GM13977 (cell line): ENCODE measurements at regions of chr2 and their contacts with region 1.

Region 1: GRCh38 chr2:179129574-179130238 is 79.8 kb upstream of the CCDC141 start:
- DNase-seq: peak; percentile 15
- CTCF ChIP-seq: peak; percentile 80

Region 2: DNA sequence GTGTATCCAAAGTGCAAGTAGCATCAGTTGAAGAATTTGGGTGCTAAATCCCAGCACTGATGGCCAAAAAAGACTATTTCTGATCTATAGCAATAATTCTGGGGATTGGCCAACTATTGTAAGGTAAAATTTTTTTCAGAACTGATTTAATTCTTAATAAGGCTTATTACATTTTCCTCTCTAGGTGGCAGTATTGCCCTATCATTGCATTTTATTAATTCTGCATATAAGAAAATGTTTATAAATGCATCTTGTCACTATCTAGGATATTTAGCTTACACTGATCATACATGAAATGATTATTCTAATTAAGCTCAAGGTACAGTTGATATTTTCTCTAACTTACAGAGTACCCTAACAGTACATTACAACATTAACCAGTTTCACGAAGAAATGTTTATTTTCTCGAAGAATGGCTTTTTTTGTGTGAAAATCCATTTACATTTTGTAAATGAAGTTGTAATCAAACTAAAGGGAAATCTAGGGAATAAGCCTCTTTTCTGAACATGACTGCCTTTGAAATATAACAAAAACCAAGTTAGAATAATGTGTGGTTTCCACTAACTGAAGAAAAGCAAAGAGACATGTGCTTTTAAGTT is 333.5 kb before region 1 on chr2:
- in situ Hi-C with region 1: loop called (anchors 25 kb)
- DNase-seq: peak; percentile 48
- CTCF ChIP-seq: peak; percentile 48

Region 3: GRCh38 chr2:178830451-178830850 is 299.3 kb before region 1 on chr2:
- in situ Hi-C with region 1: no loop called
- DNase-seq: no peak
- CTCF ChIP-seq: no peak

Region 4: GRCh38 chr2:179550214-179550613 is 420.5 kb after region 1 on chr2:
- in situ Hi-C with region 1: no loop called
- DNase-seq: no peak
- CTCF ChIP-seq: no peak

Region 5: DNA sequence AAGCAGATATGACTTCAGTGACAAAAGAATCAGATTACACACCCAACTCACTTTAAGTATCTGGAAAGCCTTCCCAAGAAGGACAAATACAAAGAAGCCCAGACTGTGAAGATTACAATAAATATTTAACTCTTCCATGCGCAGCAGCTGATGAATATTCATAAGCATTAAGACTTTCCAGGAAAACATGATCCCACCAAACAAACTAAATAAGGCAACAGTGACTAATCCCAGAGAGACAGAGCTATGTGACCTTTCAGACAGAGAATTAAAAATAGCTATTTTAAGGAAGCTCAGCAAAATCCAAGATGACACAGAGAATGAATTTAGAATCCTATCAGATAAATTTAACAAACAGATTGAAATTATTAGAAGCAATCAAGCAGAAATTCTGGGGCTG is 1742.5 kb after region 1 on chr2:
- in situ Hi-C with region 1: no loop called
- DNase-seq: no peak
- CTCF ChIP-seq: no peak